Caco-2 (cell line): ENCODE measurements at regions of chr3 and their contacts with region 1.

Region 1: DNA sequence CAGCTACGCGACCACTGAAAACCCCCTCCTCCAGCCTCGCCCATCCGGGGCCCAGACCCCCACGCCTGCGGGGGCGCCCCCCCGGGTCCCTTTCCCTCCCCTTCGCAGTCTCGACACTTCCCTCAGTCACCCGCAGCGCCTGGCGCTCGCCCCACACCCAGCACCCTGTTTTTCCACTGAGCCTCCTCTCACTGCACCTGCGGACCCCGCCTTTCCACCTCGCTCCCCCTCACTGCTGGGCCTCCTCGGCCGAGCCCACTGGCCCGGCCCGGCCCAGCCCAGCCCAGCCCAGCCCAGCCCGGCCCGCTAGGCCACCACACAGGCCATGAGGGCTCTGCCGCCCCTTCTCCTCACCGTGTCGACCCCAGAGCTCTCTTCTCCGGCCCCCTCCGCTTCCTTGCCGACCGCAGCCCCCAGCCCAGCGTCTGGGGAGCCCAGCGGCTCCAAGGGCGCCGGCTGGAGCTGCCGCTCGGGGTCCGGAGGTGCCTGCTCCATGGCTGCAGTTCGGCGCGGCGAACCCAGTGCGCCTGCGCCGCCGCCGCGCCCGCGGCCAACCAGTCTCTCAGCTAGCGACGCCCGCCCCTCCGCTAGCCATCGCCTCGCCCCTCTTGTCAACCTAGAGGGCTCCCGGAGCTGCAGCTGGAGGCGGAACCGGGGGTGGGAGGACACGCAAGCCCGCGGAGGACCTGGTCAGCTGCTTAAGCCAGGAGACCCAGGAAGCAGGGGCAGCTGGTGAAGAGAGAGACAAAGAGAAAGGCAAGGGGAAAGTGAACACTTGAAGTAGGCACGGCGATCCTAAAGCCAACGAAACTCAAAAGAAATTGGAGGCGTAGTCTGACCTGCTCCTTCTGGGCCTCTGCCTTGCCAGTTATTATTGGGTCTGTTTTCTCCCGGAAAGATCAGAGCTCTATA is at the start of gene SNX4:
- DNase-seq: peak; percentile 93 to 96
- H3K4me3 ChIP-seq: peak within 1 kb of the TSS; percentile 69
- H3K4me3 Mint-ChIP-seq: peak within 1 kb of the TSS; percentile 92
- H3K27ac Mint-ChIP-seq: peak within 1 kb of the TSS; percentile 91
- H3K4me1 ChIP-seq: no peaks in the 10 kb centered on the region
- H3K4me1 Mint-ChIP-seq: peaks cover 7% of the 10 kb centered on the region
- H3K27me3 ChIP-seq: no peaks in the 10 kb centered on the region
- H3K27me3 Mint-ChIP-seq: no peaks in the 10 kb centered on the region
- CTCF ChIP-seq: no peak
- total RNA-seq, gene SNX4: 54.6 and 59.0 TPM in 2 replicates

Region 2: DNA sequence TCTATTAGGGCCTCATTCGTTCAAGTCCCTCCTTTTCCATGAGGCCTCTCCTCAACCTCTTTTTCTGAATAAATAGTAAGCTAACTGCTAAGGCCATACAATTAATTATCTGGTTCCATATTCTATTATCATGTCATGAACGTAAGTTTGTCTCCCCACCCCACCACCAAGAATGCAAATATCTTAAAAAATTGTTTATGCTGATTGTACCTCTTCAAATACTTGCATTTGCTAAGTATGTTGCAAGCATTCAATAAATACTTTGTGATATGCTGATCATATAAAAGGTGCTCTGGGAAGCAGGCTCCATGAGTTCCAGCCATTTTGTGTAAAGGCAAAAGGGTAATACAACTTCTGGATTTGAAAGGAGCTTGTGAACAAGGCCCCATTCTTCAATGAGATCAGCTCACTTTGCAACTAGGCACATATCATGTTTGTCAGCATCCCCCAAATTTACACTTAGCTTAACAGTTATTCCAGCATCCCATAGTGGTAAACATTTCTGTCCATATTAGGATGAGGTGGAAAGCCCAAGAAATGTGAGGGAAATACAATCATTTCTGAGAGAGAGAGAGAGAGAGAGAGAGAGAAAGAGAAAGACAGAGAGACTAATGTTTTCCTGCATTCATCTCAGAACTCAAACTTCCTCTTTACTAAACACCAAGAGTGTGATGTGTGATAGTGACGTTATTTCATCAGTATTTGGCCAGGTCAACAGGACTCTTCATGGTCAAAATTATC is 340.6 kb before region 1 on chr3:
- CTCF ChIA-PET with region 1: no interaction called
- POLR2A ChIA-PET with region 1: no interaction called
- intact Hi-C with region 1: no loop called
- DNase-seq: no peak
- H3K4me3 ChIP-seq: no peak overlapping the region
- H3K4me3 Mint-ChIP-seq: no peak overlapping the region
- H3K27ac Mint-ChIP-seq: no peak overlapping the region
- H3K4me1 ChIP-seq: no peaks in the 10 kb centered on the region
- H3K4me1 Mint-ChIP-seq: no peaks in the 10 kb centered on the region
- H3K27me3 ChIP-seq: no peaks in the 10 kb centered on the region
- H3K27me3 Mint-ChIP-seq: no peaks in the 10 kb centered on the region
- CTCF ChIP-seq: no peak

Region 3: GRCh38 chr3:125496701-125497100 is 23.2 kb before region 1 on chr3:
- CTCF ChIA-PET with region 1: no interaction called
- POLR2A ChIA-PET with region 1: interaction called, 10 read pairs
- intact Hi-C with region 1: no loop called
- DNase-seq: no peak
- H3K4me3 ChIP-seq: no peak overlapping the region
- H3K4me3 Mint-ChIP-seq: no peak overlapping the region
- H3K27ac Mint-ChIP-seq: no peak overlapping the region
- H3K4me1 ChIP-seq: peaks cover 12% of the 10 kb centered on the region
- H3K4me1 Mint-ChIP-seq: peaks cover 9% of the 10 kb centered on the region
- H3K27me3 ChIP-seq: no peaks in the 10 kb centered on the region
- H3K27me3 Mint-ChIP-seq: no peaks in the 10 kb centered on the region
- CTCF ChIP-seq: no peak